Dendritic cell treated with granulocyte-macrophage colony-stimulating factor and Interleukin-4, amounts not matched to agents 40 ng/mL and 50 ng/mL, for 4 days (primary cell): ENCODE measurements at regions of chr3 and their contacts with region 1.

Region 1: GRCh38 chr3:37086918-37087317 is 87.5 kb downstream of the LRRFIP2 start:
- H3K4me3 Mint-ChIP-seq: no peak overlapping the region
- H3K27ac Mint-ChIP-seq: no peak overlapping the region
- H3K4me1 Mint-ChIP-seq: peaks cover 5% of the 10 kb centered on the region
- H3K27me3 Mint-ChIP-seq: no peaks in the 10 kb centered on the region

Region 2: GRCh38 chr3:37202035-37202434 is 115.1 kb after region 1 on chr3:
- intact Hi-C with region 1: loop called (anchors 10 kb)
- H3K4me3 Mint-ChIP-seq: no peak overlapping the region
- H3K27ac Mint-ChIP-seq: no peak overlapping the region
- H3K4me1 Mint-ChIP-seq: peaks cover 7% of the 10 kb centered on the region
- H3K27me3 Mint-ChIP-seq: no peaks in the 10 kb centered on the region